ENCODE measurements at regions of chr3 and their contacts with region 1.

Region 1: GRCh38 chr3:169772305-169772896 is 795 bp upstream of the MYNN start:
- DNase-seq: peak; percentile 84
- H3K4me3 ChIP-seq: peak overlapping the region; percentile 76
- H3K27ac ChIP-seq: peak overlapping the region; percentile 97
- H3K4me1 ChIP-seq: peaks cover 18% of the 10 kb centered on the region
- H3K27me3 ChIP-seq: no peaks in the 10 kb centered on the region
- CTCF ChIP-seq: no peak

Region 2: DNA sequence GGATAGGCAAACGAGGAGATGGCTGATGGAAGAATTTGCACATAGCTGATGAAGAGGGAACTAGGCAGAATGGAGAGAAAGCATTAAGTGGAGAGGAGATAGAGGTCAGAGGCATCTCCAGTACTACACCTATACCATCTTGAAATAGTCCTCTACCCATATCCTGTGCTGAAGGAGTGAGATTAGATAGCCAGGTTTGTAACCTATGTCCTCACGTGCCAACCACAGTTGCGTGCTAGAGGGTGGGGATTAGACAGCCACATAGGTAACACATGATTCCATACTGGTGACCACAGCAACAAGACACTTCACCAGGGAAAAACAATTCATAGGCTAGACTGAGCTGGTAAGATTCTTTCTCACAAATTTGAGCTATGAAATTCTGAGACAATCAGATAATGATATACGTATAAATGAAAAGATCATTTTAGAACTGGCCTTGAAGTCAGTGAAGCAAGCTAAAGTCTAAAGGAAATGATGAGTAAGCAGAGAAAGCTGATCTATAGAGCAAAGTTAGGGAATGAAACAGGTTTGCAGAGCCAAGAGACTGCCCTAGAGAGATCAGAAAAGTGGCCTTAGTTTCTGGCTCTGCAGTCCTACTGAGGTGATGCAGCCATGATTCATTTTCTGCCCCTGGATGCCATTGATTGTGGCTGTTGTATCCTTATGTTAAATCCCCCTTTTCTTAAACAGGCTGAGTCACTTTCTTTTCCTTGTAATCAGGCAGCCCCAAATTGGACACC is 18.5 kb after region 1 on chr3:
- CTCF ChIA-PET with region 1: interaction called, 11 read pairs
- POLR2A ChIA-PET with region 1: no interaction called
- intact Hi-C with region 1: no loop called
- DNase-seq: no peak
- H3K4me3 ChIP-seq: no peak overlapping the region
- H3K27ac ChIP-seq: no peak overlapping the region
- H3K4me1 ChIP-seq: no peaks in the 10 kb centered on the region
- H3K27me3 ChIP-seq: no peaks in the 10 kb centered on the region
- CTCF ChIP-seq: no peak

Region 3: DNA sequence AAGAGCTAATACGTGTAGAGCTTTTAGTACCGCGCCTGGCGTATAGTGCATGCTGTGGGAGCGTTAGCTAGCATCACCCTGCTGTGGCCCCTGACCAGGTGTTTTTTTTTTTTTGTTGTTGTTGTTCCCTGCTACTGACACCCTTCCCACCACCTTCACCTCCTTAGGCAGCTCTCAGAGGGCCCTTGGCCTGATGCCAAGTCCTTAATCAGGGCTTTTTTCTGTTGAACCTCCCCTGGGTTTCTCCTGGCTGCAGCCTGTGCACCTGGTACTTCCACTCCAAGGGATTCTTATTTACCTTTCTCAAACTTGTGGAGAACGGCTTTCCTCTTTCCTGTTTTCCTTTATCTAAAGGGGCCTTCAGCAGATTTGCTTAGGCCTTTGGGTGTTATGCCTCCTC is 760.2 kb after region 1 on chr3:
- CTCF ChIA-PET with region 1: no interaction called
- POLR2A ChIA-PET with region 1: interaction called, 12 read pairs
- intact Hi-C with region 1: no loop called
- DNase-seq: no peak
- H3K4me3 ChIP-seq: no peak overlapping the region
- H3K27ac ChIP-seq: no peak overlapping the region
- H3K4me1 ChIP-seq: no peaks in the 10 kb centered on the region
- H3K27me3 ChIP-seq: peaks cover 28% of the 10 kb centered on the region
- CTCF ChIP-seq: no peak

Measured in A673 (cell line).